Activated CD4-positive, alpha-beta T cell treated with anti-CD3 and anti-CD28 coated beads, Interleukin-2, amount 10 ng/mL, durations not matched to agents 24 days and 14 days (primary cell): ENCODE measurements at regions of chr6 and their contacts with region 1.

Region 1: DNA sequence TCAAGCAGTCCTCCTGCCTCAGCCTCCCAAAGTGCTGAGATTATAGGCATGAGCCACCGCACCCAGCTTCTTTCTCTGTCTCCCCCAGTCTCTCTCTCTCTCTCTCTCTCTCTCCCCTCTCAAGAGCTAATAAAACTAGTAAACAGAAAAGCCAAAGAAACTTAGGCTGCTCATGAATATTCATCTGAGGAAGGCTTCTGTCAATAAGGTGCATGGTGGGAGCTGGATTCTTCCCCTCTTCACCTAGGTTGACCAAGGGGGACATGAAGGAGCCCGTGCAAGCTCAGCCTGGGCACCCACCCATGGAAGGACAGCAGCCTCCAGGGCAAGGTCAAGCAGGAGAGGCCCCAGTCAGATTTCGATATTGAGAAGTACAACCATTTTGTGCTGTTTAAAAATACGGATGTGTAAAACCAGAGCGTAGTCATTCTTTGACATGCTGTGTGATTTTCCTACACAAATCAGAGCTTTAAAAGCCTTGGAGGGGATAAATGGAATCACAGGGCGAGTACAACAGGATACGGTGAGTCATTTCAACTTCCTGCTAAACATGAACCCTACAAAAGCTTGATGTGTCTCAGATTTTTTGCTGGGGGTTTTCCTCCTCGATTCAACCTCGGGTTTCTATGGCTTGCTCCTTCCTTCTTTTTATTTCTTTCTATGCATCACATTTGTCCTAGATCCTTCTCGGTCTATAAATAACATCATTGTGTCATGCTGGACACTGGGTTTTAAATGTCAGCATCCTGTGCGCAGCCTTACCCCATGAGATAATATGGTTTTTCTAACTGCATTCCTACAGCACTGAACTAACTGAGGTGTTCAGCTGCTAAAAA is 368.9 kb upstream of the JARID2 start:
- DNase-seq: peak; percentile 81
- H3K4me3 Mint-ChIP-seq: peak overlapping the region; percentile 79
- H3K27ac Mint-ChIP-seq: peak overlapping the region; percentile 97
- H3K4me1 Mint-ChIP-seq: peaks cover 68% of the 10 kb centered on the region
- H3K27me3 Mint-ChIP-seq: no peaks in the 10 kb centered on the region

Region 2: GRCh38 chr6:14210663-14211561 is 666.1 kb before region 1 on chr6:
- intact Hi-C with region 1: loop called (anchors 2 kb)
- DNase-seq: peak; percentile 98
- H3K4me3 Mint-ChIP-seq: peak overlapping the region; percentile 85
- H3K27ac Mint-ChIP-seq: peak overlapping the region; percentile 85
- H3K4me1 Mint-ChIP-seq: peaks cover 21% of the 10 kb centered on the region
- H3K27me3 Mint-ChIP-seq: no peaks in the 10 kb centered on the region

Region 3: DNA sequence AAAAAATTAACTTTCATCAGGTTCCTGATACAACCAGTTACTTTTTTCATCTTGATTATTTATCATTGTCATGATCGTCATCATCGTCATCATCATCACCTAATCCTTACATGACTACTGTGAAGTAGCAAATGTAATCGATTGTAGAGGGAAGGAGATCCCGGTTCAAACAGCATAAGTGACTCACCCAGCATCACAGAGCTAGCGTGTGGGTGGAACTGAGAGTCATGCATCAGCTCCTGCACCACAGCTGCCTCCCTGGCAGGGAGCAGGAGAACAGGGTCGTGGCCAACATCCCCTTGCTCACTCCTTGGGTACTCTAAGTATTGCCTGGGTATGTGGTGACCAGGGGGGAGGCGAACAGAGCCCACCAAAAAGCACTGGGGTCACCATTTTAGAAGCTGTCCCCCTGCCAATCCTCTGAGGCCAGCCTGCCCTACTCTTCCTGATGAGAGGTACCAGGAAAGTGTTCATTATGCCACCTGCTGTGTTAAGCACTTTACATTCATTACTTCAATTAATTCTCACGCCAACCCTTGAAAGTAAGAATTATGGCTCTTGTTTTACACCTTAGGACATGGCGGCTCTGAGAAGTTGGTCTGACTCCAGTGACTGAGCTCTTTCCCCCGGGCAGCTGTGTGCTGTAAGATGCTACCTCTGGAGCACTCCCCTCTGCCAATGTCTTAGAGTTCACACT is 334.2 kb before region 1 on chr6:
- intact Hi-C with region 1: loop called (anchors 10 kb)
- DNase-seq: peak; percentile 74
- H3K4me3 Mint-ChIP-seq: peak overlapping the region; percentile 17
- H3K27ac Mint-ChIP-seq: peak overlapping the region; percentile 59
- H3K4me1 Mint-ChIP-seq: peaks cover 25% of the 10 kb centered on the region
- H3K27me3 Mint-ChIP-seq: peaks cover 2% of the 10 kb centered on the region

Region 4: DNA sequence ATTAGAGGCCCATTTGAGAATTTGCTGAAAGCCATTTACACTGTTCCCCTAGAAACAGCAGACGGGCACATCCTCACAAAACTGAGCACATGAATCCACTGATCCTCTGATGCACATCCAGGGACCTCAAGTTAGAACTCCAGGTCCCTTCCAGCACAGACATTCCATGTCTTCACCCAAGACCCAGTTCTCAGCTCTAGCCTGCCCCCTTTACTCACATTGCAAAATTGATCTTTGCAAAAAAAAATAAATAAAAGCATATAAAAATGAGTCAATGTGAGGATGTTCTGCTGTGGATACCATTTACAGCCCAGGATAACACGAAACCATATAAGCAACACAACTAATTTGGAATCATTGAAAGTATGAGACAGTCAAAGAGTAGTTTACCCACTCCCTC is 89.3 kb before region 1 on chr6:
- intact Hi-C with region 1: loop called (anchors 1 kb)
- DNase-seq: no peak
- H3K4me3 Mint-ChIP-seq: no peak overlapping the region
- H3K27ac Mint-ChIP-seq: no peak overlapping the region
- H3K4me1 Mint-ChIP-seq: peaks cover 42% of the 10 kb centered on the region
- H3K27me3 Mint-ChIP-seq: no peaks in the 10 kb centered on the region

Region 5: DNA sequence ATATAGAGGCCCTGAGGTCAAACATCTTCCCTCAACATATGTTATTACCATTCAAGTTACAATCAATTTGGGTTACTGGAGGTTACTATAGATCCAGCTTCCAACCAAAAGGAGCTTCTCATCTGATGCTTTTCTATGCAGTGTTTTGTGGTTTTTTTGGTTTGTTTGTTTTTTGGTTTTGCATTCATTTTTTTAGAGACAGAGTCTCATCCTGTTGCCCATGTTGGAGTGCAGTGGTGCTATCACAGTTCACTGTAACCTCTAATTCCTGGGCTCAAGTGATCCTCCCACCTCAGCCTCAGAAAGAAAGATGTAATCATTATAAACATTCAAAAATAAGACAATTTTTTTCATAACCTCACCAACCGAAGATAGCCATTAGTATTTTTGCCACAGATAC is 244.4 kb after region 1 on chr6:
- intact Hi-C with region 1: loop called (anchors 5 kb)
- DNase-seq: peak; percentile 64
- H3K4me3 Mint-ChIP-seq: no peak overlapping the region
- H3K27ac Mint-ChIP-seq: no peak overlapping the region
- H3K4me1 Mint-ChIP-seq: peaks cover 13% of the 10 kb centered on the region
- H3K27me3 Mint-ChIP-seq: no peaks in the 10 kb centered on the region

Region 6: GRCh38 chr6:15299430-15300131 is 422.6 kb after region 1 on chr6:
- intact Hi-C with region 1: loop called (anchors 1 kb)
- DNase-seq: peak; percentile 74
- H3K4me3 Mint-ChIP-seq: peak overlapping the region; percentile 20
- H3K27ac Mint-ChIP-seq: peak overlapping the region; percentile 65
- H3K4me1 Mint-ChIP-seq: peaks cover 68% of the 10 kb centered on the region
- H3K27me3 Mint-ChIP-seq: no peaks in the 10 kb centered on the region